CD8-positive, alpha-beta T cell (primary cell): ENCODE measurements at regions of chrX and their contacts with region 1.

Region 1: DNA sequence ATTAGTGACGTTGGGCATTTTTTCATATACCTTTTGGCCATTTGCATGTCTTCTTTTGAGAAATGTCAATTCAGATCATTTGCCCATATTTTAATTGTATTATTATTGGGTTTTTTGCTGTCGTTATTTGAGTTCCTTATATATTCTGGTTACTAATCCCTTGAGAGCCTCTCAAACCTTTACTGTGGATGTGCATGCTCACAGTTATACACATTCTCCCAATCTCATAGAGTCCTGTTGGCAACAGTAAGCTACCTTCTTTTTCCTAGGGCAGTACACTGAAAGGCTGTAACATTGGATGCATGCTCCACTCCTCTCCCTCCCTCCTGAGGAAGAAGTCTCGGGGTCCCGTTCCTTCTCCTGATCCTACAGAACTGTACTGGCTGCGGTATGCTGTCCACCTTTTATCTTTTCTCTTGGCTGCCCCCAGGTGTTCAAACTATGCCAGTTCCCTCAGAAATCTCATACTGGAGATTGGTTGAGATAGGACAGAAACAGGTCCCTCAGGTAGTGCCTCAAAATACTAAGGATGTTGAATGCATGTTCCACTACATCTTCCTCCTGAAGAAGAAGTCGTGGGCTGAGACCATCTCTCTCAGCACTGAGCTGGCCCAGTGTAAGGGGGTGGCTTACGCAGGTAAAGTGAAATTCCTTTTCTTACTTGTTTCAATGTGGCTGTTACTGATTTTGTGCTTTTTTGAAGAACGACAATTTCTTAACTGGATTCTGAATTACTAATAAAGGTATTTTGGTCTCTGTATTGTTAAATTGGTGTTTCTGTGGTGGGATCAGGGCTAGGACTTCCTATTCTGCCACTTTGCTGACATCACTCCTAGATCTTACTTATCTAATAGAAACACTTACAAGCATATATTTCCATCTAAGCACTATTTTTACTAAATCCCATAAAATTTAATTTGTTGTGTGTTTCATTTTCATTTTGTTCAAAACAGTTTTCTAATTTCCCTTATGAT is 145.4 kb upstream of the HUWE1 start:
- DNase-seq: peak; percentile 1 to 62 (median 39)
- ATAC-seq: peak; percentile 73
- H3K4me3 ChIP-seq: no peak overlapping the region
- H3K4me3 Mint-ChIP-seq: no peak overlapping the region
- H3K27ac ChIP-seq: no peak overlapping the region
- H3K27ac Mint-ChIP-seq: peak overlapping the region; percentile 18
- H3K4me1 ChIP-seq: no peaks in the 10 kb centered on the region
- H3K4me1 Mint-ChIP-seq: peaks cover 5% of the 10 kb centered on the region
- H3K27me3 ChIP-seq: no peaks in the 10 kb centered on the region
- H3K27me3 Mint-ChIP-seq: no peaks in the 10 kb centered on the region
- CTCF ChIP-seq: peak; percentile 46

Region 2: GRCh38 chrX:51954592-51954991 is 1877.4 kb before region 1 on chrX:
- CTCF ChIA-PET with region 1: no interaction called
- POLR2A ChIA-PET with region 1: no interaction called
- intact Hi-C with region 1: no loop called
- DNase-seq: no peak
- ATAC-seq: no peak
- H3K4me3 ChIP-seq: no peak overlapping the region
- H3K4me3 Mint-ChIP-seq: no peak overlapping the region
- H3K27ac ChIP-seq: no peak overlapping the region
- H3K27ac Mint-ChIP-seq: no peak overlapping the region
- H3K4me1 ChIP-seq: no peaks in the 10 kb centered on the region
- H3K4me1 Mint-ChIP-seq: no peaks in the 10 kb centered on the region
- H3K27me3 ChIP-seq: no peaks in the 10 kb centered on the region
- H3K27me3 Mint-ChIP-seq: peaks cover 2% of the 10 kb centered on the region
- CTCF ChIP-seq: no peak

Region 3: DNA sequence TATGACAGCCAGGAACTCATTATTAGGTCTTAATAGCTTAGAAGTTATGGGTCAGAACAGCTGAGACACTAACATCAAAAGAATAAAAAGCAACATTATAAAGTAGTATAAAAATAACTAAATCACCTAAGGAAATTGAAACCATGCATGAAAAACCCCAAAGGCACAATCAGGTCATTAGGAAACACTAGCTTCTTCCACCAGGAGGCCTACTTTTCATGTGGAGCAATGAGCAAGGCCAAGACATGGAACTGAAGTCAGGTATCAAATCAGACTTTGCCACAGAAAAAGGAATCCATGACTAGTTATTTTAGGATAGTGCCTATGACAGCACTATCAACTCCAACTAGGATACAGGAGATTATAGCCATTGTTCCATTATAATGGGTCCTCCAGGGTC is 153.3 kb before region 1 on chrX:
- CTCF ChIA-PET with region 1: interaction called, 4 read pairs
- POLR2A ChIA-PET with region 1: no interaction called
- intact Hi-C with region 1: loop called (anchors 2 kb)
- DNase-seq: peak in 2 of 9 experiments; percentile 42 to 57
- ATAC-seq: no peak
- H3K4me3 ChIP-seq: no peak overlapping the region
- H3K4me3 Mint-ChIP-seq: peak overlapping the region; percentile 18
- H3K27ac ChIP-seq: no peak overlapping the region
- H3K27ac Mint-ChIP-seq: peak overlapping the region; percentile 27
- H3K4me1 ChIP-seq: peaks cover 31% of the 10 kb centered on the region
- H3K4me1 Mint-ChIP-seq: peaks cover 64% of the 10 kb centered on the region
- H3K27me3 ChIP-seq: no peaks in the 10 kb centered on the region
- H3K27me3 Mint-ChIP-seq: no peaks in the 10 kb centered on the region
- CTCF ChIP-seq: no peak